PC-9 (cell line): ENCODE measurements at regions of chr10 and their contacts with region 1.

Region 1: GRCh38 chr10:99395750-99396445 is 34.5 kb downstream of the GOT1 start:
- DNase-seq: peak; percentile 63 to 86
- H3K4me3 ChIP-seq: no peak overlapping the region
- H3K27ac ChIP-seq: peak overlapping the region; percentile 53
- H3K4me1 ChIP-seq: peaks cover 52% of the 10 kb centered on the region
- H3K27me3 ChIP-seq: no peaks in the 10 kb centered on the region
- CTCF ChIP-seq: no peak

Region 2: GRCh38 chr10:99382181-99382580 is 13.7 kb before region 1 on chr10:
- CTCF ChIA-PET with region 1: no interaction called
- POLR2A ChIA-PET with region 1: interaction called, 12 read pairs
- intact Hi-C with region 1: no loop called
- DNase-seq: no peak
- H3K4me3 ChIP-seq: no peak overlapping the region
- H3K27ac ChIP-seq: no peak overlapping the region
- H3K4me1 ChIP-seq: no peaks in the 10 kb centered on the region
- H3K27me3 ChIP-seq: no peaks in the 10 kb centered on the region
- CTCF ChIP-seq: no peak

Region 3: DNA sequence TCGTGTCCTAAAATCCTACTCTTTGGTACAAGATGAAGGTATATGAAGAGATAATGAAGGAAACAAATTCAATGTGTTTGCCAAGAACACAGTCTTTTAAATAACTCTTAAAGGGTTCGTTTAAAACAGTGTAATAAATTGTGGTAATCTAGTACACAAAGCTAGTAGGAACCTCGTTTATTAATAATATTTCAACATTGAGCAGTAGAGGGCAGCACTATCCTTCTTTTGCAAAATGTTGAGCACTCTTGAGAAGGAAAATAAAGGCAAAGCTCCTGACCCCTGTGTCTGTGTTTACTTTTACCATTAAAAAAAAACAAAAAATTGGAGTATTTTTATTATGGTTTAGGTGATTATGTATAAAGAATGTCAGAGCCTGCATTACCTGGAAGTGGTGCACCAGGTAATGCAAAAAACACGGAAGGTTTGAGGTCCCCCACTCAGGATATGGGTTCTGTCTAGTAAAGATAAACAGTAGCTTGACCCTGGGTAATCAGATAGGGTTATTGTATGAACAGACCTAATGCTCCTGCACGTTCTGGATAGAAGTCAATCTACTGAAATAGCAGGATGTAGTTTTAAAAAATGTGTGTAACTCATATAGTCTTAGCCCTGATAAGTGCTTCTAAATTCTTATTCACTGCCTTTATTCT is 40.2 kb after region 1 on chr10:
- CTCF ChIA-PET with region 1: interaction called, 11 read pairs
- POLR2A ChIA-PET with region 1: interaction called, 3 read pairs
- intact Hi-C with region 1: loop called (anchors 1 kb)
- DNase-seq: peak in 1 of 2 experiments; percentile 40
- H3K4me3 ChIP-seq: no peak overlapping the region
- H3K27ac ChIP-seq: no peak overlapping the region
- H3K4me1 ChIP-seq: no peaks in the 10 kb centered on the region
- H3K27me3 ChIP-seq: no peaks in the 10 kb centered on the region
- CTCF ChIP-seq: peak; percentile 68

Region 4: DNA sequence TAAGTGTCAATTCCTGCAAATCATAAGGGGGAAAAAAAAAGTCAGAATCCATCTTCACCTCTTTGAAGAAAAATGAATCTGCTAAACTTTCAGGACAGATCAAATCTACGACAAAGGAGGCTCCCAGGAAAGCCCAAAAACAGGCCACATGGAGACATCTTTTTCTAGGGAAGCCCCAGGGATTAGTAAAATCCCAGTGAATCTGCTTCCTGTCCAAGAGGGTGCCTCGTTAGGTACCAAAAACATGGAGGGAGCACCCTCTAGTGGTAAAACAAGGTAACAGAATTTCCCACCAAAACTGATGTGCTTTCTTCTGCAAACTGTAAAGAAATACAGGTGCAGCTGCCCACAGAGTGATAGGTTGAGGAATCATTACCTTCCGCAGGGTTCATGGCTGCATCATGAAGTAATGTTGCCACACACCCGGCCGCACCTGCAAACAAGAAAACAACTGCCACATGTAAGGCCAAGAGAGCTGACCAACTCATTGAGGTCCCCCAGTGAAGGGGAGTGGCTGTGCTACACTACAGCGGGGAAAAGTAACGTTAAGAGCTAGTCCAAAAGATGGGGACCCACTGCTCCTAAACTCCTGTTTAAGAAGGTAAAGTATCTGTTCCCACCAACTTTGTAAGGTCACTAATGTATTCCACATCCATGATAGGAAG is 216.4 kb after region 1 on chr10:
- CTCF ChIA-PET with region 1: no interaction called
- POLR2A ChIA-PET with region 1: no interaction called
- intact Hi-C with region 1: loop called (anchors 1 kb)
- DNase-seq: peak; percentile 25 to 55
- H3K4me3 ChIP-seq: no peak overlapping the region
- H3K27ac ChIP-seq: no peak overlapping the region
- H3K4me1 ChIP-seq: no peaks in the 10 kb centered on the region
- H3K27me3 ChIP-seq: no peaks in the 10 kb centered on the region
- CTCF ChIP-seq: peak; percentile 80

Region 5: GRCh38 chr10:99711129-99711719 is 315.3 kb after region 1 on chr10:
- CTCF ChIA-PET with region 1: no interaction called
- POLR2A ChIA-PET with region 1: no interaction called
- intact Hi-C with region 1: loop called (anchors 5 kb)
- DNase-seq: peak in 1 of 2 experiments; percentile 10
- H3K4me3 ChIP-seq: no peak overlapping the region
- H3K27ac ChIP-seq: no peak overlapping the region
- H3K4me1 ChIP-seq: no peaks in the 10 kb centered on the region
- H3K27me3 ChIP-seq: no peaks in the 10 kb centered on the region
- CTCF ChIP-seq: peak; percentile 67; the same call in 1 of the 2 replicates